Posterior vena cava (tissue), 2 donors: ENCODE measurements at regions of chr2 and their contacts with region 1.

Region 1: DNA sequence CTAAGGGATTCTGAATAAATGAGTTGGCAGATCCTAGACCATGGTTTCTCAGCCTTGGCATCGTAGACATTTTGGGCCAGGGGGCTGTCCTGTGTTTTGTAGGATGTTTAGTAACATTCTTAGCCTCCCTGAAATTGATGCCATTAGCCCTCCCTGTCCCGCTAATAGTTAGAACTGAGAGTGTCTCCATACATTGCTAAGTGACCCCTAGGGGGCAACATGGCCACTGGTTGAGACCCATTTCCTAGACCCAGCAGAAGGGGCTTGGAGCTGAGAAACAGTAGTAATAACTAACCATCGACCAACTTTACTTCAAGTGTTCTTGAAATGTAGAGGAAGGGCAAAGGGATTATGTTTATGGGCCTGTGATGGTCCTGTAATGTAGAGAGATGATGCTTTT is 40.8 kb downstream of the KCMF1 start:
- DNase-seq: no peak

Region 2: DNA sequence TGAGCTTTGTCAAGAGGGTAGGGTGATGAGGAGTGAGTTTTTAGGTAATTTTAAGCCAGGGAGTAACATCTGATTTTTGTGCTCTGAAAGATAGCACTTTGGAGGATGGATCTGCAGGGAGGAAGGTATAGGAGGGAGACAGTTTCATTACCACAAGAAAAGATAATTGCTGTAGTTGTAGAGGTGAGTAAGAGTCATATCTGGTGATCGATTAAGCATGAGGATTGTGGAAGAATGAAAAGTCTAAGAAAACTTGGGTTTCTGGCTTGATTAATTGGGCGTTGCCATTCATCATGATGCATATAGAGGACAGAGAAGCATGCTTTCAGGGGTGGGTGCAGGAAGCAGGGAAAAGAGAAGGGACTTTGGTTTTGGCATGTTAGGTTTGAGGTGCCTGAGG is 22.3 kb before region 1 on chr2:
- intact Hi-C with region 1: loop called in 1 of 2 experiments (anchors 1 kb)
- DNase-seq: no peak